Panc1 (cell line): ENCODE measurements at regions of chr1 and their contacts with region 1.

Region 1: DNA sequence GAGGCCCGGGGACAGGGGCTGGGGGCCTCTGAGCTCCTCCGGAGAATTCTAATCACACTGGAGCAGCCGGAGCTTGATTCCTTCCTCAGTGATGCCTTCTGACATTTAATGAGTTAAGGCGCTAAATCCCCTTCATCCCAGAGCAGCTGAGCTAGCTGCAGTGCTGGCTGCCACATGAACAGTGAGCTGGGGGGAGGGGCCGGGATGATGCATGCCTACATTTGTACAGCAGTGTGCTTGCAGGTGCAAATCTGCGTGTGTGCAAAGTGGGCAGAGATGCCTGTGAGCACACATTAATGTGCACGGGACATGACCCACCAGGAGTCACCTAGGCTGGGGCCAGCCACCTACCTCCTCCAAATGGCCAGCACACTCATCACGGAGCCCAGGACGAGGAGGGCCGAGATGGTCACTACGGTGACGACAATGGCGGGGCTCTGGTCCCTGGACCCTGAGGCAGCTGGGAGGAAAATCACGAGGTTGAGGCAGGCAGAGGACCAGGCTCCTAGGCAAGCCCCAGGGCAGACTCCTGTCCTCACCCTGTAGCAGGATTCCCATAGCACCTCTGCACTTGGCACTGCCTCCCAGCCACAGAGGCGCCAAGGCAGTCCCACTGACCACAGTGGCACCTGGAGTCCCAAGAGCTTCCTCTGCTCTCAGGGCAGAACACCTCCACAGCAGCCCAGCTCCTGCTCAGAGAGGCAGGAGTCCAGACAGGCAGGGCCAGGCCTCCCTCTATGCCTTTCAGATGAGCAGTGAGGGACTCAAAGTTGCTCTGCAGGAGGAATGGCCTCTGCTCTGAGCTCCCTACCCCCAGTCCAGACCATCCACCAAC is 34.7 kb downstream of the CDCA8 start:
- DNase-seq: no peak
- ATAC-seq: no peak
- H3K4me3 ChIP-seq: no peak overlapping the region
- H3K27ac ChIP-seq: no peak overlapping the region
- H3K4me1 ChIP-seq: no peaks in the 10 kb centered on the region
- H3K27me3 ChIP-seq: no peaks in the 10 kb centered on the region
- CTCF ChIP-seq: no peak

Region 2: GRCh38 chr1:37495798-37496197 is 231.2 kb before region 1 on chr1:
- CTCF ChIA-PET with region 1: no interaction called
- POLR2A ChIA-PET with region 1: interaction called, 12 read pairs
- in situ Hi-C with region 1: no loop called
- intact Hi-C with region 1: no loop called
- DNase-seq: no peak
- ATAC-seq: no peak
- H3K4me3 ChIP-seq: no peak overlapping the region
- H3K27ac ChIP-seq: no peak overlapping the region
- H3K4me1 ChIP-seq: peaks cover 17% of the 10 kb centered on the region; the same call in 1 of the 2 replicates
- H3K27me3 ChIP-seq: no peaks in the 10 kb centered on the region
- CTCF ChIP-seq: no peak

Region 3: DNA sequence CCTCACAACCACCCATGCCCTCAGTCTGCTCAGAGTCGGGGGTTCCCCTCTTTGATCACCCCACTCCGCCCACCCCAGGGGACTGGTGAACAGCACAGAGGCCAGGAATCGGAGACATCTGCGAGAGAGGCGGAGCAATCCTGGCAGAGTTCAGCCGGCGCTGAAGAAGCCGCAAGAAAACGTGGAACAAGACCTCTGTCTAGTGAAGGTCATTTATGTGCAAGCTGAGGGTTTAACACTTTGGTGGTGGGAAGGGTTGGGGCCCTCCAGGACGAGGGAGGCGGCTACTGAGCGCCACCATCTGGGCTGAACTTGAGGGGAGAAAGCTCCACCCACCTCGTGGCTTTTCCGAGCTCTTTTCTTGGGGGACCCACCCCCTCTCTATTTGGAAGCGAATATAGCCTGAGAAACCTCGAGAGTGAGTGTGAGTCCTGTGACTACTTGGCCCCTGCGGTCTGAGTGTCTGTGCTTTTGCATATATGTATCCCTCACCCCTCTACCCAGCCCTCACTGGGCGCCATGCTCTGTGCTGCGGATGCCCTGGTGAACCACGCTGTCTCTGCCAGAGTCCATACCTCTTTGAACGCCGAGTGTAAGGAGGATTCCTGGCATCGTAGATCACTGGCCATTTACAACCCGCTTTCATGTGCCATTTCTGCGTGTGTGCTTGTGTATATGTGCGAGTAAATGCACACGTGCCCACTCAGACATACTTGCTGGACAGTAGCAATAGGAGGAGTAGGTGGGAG is 39.1 kb after region 1 on chr1:
- CTCF ChIA-PET with region 1: no interaction called
- POLR2A ChIA-PET with region 1: no interaction called
- in situ Hi-C with region 1: no loop called
- intact Hi-C with region 1: no loop called
- DNase-seq: no peak
- ATAC-seq: peak; percentile 71
- H3K4me3 ChIP-seq: peak overlapping the region; percentile 39 to 54
- H3K27ac ChIP-seq: no peak overlapping the region
- H3K4me1 ChIP-seq: peaks cover 10% of the 10 kb centered on the region; the same call in 1 of the 2 replicates
- H3K27me3 ChIP-seq: peaks cover 27% of the 10 kb centered on the region
- CTCF ChIP-seq: peak; percentile 63

Region 4: GRCh38 chr1:38097284-38097898 is 370.4 kb after region 1 on chr1:
- CTCF ChIA-PET with region 1: no interaction called
- POLR2A ChIA-PET with region 1: no interaction called
- in situ Hi-C with region 1: no loop called
- intact Hi-C with region 1: no loop called
- DNase-seq: no peak
- ATAC-seq: no peak
- H3K4me3 ChIP-seq: no peak overlapping the region
- H3K27ac ChIP-seq: no peak overlapping the region
- H3K4me1 ChIP-seq: no peaks in the 10 kb centered on the region
- H3K27me3 ChIP-seq: no peaks in the 10 kb centered on the region
- CTCF ChIP-seq: no peak